HAP-1 (cell line): ENCODE measurements at regions of chr1 and their contacts with region 1.

Region 1: GRCh38 chr1:62508187-62508758 is 71.4 kb downstream of the USP1 start:
- DNase-seq: peak; percentile 24 to 53
- H3K4me3 ChIP-seq: no peak overlapping the region
- H3K4me1 ChIP-seq: no peaks in the 10 kb centered on the region
- H3K27me3 ChIP-seq: no peaks in the 10 kb centered on the region

Region 2: DNA sequence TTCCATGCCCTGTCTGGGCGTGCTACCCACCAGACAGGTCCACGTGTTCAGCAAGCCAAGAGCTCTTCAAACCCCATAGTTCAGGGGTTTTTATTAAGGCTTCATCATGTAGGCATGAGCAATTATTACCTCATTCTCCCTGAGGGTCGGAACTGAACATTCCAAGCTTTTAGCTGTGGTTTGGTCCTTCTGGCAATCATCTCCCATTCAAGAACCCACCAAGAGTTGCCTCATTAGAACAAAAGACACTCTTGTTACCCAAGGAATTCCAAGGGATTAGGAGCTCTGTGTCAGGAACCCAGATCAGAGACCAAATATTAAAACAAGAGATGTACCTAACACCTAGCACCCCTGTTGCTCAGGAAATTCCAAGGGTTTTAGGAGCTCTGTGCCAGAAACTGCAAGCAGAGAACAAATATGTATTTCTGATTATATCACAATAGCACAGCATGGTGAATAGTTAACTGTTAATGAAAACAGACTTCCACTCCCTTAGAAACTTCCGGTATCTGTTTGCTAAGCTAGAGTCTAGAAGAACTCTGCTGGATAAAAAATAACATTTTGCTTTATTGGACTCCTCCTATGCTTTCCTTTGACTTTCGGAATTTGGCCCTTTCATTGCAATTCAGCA is 514.8 kb before region 1 on chr1:
- in situ Hi-C with region 1: no loop called
- DNase-seq: no peak
- H3K4me3 ChIP-seq: no peak overlapping the region
- H3K4me1 ChIP-seq: no peaks in the 10 kb centered on the region
- H3K27me3 ChIP-seq: no peaks in the 10 kb centered on the region

Region 3: DNA sequence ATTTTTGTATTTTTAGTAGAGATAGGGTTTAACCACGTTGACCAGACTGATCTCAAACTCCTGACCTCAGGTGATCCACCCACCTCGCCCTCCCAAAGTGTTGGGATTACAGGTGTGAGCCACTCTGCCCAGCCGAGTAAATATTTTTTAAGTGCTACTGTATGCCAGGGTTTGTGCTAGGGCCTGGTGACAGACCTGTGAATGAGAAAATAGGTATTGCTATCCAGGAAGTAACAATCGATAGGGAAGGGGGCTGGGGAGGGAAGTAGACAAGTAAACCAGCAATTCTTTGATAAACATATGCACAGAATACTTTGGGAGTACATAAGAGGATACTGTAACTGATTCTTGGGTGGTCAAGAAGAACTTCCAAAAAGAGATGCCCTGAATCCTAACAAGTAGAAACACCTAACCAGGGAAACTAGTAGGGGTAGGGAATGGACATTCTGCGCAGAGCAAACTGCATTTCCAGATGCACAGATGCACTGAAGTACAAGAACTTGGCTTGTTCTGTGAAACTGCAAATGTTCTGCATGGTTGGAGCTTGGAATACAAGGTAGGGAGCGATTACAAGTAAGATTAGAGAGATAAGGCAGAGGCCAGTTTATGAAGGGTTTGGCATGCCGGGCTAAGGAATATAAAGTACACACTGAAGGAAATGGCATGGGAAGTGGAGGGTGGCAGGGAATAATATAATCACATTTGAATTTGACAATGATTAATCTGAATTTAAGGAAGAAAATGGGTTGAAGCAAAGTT is 198.9 kb after region 1 on chr1:
- in situ Hi-C with region 1: no loop called
- DNase-seq: no peak
- H3K4me3 ChIP-seq: no peak overlapping the region
- H3K4me1 ChIP-seq: no peaks in the 10 kb centered on the region
- H3K27me3 ChIP-seq: no peaks in the 10 kb centered on the region

Region 4: GRCh38 chr1:62746085-62746808 is 238.0 kb after region 1 on chr1:
- in situ Hi-C with region 1: loop called (anchors 25 kb)
- DNase-seq: peak in 1 of 2 experiments; percentile 74
- H3K4me3 ChIP-seq: no peak overlapping the region
- H3K4me1 ChIP-seq: no peaks in the 10 kb centered on the region
- H3K27me3 ChIP-seq: no peaks in the 10 kb centered on the region